GM10248 (cell line): ENCODE measurements at regions of chr13 and their contacts with region 1.

Region 1: DNA sequence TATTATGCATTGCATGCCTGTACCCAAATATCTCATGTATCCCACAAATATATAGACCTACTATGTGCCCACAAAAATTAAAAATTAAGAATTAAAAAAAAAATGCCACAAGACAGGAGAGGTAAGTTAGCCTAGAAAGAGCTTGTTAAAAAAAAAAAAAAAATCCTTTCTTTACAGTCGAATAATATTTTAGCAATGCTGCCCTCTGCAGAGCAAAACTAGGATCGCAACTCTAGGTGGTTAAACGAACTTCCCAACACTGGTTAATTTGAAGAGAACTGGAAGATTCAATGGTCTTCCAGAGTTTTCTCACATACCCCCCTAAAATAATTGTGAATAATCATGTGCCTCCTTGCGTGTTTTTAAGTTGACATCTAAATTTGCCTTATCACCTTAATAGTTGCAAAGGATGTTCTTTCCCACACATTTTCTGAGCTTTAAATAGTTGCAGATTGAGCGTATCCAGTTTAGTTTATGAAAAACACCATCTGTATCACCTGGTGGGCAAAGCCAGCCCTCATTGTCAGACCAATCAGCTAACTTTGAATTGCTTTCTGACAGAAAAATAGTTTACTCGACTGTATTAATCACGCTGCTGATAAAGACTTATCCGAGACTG is 47.4 kb upstream of the RCBTB2 start:
- DNase-seq: peak; percentile 20
- CTCF ChIP-seq: peak; percentile 62

Region 2: GRCh38 chr13:48126944-48127830 is 453.1 kb before region 1 on chr13:
- CTCF ChIA-PET with region 1: interaction called, 25 read pairs
- POLR2A ChIA-PET with region 1: no interaction called
- DNase-seq: peak; percentile 60
- CTCF ChIP-seq: peak; percentile 52

Region 3: DNA sequence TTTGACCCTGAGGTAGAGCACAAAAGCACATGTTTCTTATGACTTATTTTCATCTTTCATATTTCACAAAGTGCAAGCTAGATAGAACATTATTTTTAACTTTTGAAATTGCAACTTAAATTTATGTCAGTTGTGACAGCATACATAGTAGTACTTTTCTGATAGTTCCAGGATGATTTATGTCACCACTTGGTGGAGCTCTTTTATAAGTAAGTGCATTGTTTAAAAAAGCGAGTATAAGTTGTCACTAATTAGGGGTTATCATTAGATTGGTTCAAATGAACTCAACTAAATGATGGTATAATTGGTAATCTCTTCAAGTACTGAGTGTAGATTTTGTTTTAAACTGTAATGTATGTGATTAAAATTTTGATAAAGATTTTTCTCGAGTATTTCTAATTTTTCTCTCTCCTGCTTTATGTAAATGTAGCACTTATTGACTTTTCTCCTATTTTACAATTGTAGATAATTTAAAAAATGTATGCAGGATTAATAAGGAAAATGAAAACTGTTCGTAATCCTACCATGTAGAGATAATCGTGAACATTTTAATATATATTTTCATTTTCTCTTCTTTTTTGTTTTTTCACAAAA is 245.7 kb before region 1 on chr13:
- CTCF ChIA-PET with region 1: interaction called, 123 read pairs
- POLR2A ChIA-PET with region 1: no interaction called
- DNase-seq: peak; percentile 29
- CTCF ChIP-seq: peak; percentile 50

Region 4: GRCh38 chr13:48562296-48563066 is 17.8 kb before region 1 on chr13:
- CTCF ChIA-PET with region 1: interaction called, 50 read pairs
- POLR2A ChIA-PET with region 1: interaction called, 4 read pairs
- DNase-seq: peak; percentile 77
- CTCF ChIP-seq: no peak

Region 5: GRCh38 chr13:48902368-48902767 is 322.1 kb after region 1 on chr13:
- CTCF ChIA-PET with region 1: no interaction called
- POLR2A ChIA-PET with region 1: no interaction called
- DNase-seq: no peak
- CTCF ChIP-seq: no peak